B cell (primary cell): ENCODE measurements at regions of chr13 and their contacts with region 1.

Region 1: DNA sequence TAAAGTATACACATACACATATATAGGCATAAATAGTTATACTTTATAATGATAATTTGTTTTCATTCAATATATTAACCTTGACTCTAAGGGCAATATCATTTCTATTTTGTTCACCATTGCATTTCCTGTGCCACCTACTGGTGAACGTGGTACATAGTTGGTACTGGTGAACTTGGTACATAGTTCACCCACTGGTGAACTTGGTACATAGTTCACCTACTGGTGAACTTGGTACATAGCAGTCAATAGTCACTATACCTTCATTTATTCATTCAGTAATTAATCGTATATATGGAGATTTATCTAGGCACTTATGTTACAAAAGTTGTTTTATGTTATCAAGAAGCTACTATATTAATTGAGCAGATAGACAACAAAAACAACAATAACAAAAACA is 172.6 kb upstream of the ATXN8OS start:
- DNase-seq: no peak
- ATAC-seq: no peak
- H3K4me3 ChIP-seq: no peak overlapping the region
- H3K4me3 Mint-ChIP-seq: no peak overlapping the region
- H3K27ac ChIP-seq: no peak overlapping the region
- H3K27ac Mint-ChIP-seq: no peak overlapping the region
- H3K4me1 ChIP-seq: no peaks in the 10 kb centered on the region
- H3K4me1 Mint-ChIP-seq: no peaks in the 10 kb centered on the region
- H3K27me3 ChIP-seq: no peaks in the 10 kb centered on the region
- H3K27me3 Mint-ChIP-seq: no peaks in the 10 kb centered on the region
- CTCF ChIP-seq: no peak

Region 2: DNA sequence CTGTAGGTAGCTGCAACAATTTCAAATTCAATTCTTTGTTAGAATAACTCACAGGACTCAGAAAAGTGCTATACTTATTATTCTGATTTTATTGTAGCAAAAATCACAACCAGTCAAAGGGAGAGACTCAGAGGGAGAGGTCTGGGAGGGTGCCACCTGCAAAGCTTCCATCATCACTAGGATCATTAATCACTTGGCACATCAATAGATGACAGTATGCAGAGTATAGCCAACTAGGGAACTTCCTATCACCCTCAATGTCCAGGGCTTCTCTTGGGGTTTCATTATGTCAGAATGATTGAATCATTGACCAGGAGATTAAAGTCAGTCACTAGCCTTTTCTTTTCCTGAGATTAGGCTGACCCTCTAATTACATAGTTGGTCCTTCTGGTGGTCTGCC is 258.8 kb before region 1 on chr13:
- CTCF ChIA-PET with region 1: no interaction called
- POLR2A ChIA-PET with region 1: no interaction called
- intact Hi-C with region 1: loop called (anchors 10 kb)
- DNase-seq: no peak
- ATAC-seq: no peak
- H3K4me3 ChIP-seq: no peak overlapping the region
- H3K4me3 Mint-ChIP-seq: no peak overlapping the region
- H3K27ac ChIP-seq: no peak overlapping the region
- H3K27ac Mint-ChIP-seq: no peak overlapping the region
- H3K4me1 ChIP-seq: no peaks in the 10 kb centered on the region
- H3K4me1 Mint-ChIP-seq: no peaks in the 10 kb centered on the region
- H3K27me3 ChIP-seq: no peaks in the 10 kb centered on the region
- H3K27me3 Mint-ChIP-seq: no peaks in the 10 kb centered on the region
- CTCF ChIP-seq: no peak

Region 3: DNA sequence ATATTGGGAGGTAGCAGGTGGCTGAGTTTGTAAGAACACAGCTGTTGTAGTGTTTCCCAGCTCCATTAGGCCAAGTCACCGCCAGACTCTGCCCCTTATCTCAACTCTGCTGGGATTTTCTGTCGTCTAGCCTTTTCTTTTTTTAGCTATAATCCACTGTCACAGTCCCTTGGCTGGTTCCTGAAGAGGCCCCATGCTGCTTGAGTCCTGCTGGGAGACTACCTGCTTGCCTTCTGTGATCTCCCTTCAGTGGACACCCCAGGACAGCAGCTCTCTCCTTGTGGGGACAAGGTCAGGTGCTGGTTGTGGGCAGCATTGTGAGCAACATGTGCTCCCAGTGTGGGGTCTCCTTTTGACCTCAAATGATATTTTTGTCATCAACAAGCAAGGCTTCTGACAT is 22.4 kb before region 1 on chr13:
- CTCF ChIA-PET with region 1: no interaction called
- POLR2A ChIA-PET with region 1: no interaction called
- intact Hi-C with region 1: no loop called
- DNase-seq: no peak
- ATAC-seq: no peak
- H3K4me3 ChIP-seq: no peak overlapping the region
- H3K4me3 Mint-ChIP-seq: no peak overlapping the region
- H3K27ac ChIP-seq: no peak overlapping the region
- H3K27ac Mint-ChIP-seq: no peak overlapping the region
- H3K4me1 ChIP-seq: no peaks in the 10 kb centered on the region
- H3K4me1 Mint-ChIP-seq: no peaks in the 10 kb centered on the region
- H3K27me3 ChIP-seq: no peaks in the 10 kb centered on the region
- H3K27me3 Mint-ChIP-seq: no peaks in the 10 kb centered on the region
- CTCF ChIP-seq: no peak

Region 4: DNA sequence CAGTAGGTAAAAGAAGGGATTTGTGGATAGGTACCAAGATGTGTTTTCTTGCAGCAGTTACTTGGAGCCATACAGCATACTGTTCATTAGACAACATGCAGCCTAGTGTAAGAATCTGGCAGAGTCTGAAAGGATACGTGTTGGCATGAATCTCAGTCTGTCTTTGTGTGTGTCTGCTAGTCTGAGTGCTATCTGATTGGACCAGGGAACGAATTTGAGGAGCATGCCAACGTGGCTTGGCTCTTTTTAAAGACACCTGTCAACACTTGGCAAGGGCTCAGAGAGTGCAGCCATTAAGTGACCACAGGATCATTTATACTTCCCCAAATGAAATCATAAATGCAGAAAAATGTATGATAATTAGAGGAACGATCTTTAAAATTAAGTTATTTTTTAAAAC is 145.0 kb after region 1 on chr13:
- CTCF ChIA-PET with region 1: no interaction called
- POLR2A ChIA-PET with region 1: no interaction called
- intact Hi-C with region 1: no loop called
- DNase-seq: no peak
- ATAC-seq: no peak
- H3K4me3 ChIP-seq: no peak overlapping the region
- H3K4me3 Mint-ChIP-seq: no peak overlapping the region
- H3K27ac ChIP-seq: no peak overlapping the region
- H3K27ac Mint-ChIP-seq: no peak overlapping the region
- H3K4me1 ChIP-seq: no peaks in the 10 kb centered on the region
- H3K4me1 Mint-ChIP-seq: no peaks in the 10 kb centered on the region
- H3K27me3 ChIP-seq: no peaks in the 10 kb centered on the region
- H3K27me3 Mint-ChIP-seq: no peaks in the 10 kb centered on the region
- CTCF ChIP-seq: no peak

Region 5: GRCh38 chr13:70108356-70109105 is 173.5 kb after region 1 on chr13 and contains the start of gene KLHL1:
- CTCF ChIA-PET with region 1: no interaction called
- POLR2A ChIA-PET with region 1: no interaction called
- intact Hi-C with region 1: no loop called
- DNase-seq: no peak
- ATAC-seq: no peak
- H3K4me3 ChIP-seq: no peak within 1 kb of the TSS
- H3K4me3 Mint-ChIP-seq: no peak within 1 kb of the TSS
- H3K27ac ChIP-seq: no peak within 1 kb of the TSS
- H3K27ac Mint-ChIP-seq: no peak within 1 kb of the TSS
- H3K4me1 ChIP-seq: no peaks in the 10 kb centered on the region
- H3K4me1 Mint-ChIP-seq: no peaks in the 10 kb centered on the region
- H3K27me3 ChIP-seq: no peaks in the 10 kb centered on the region
- H3K27me3 Mint-ChIP-seq: no peaks in the 10 kb centered on the region
- CTCF ChIP-seq: no peak
- total RNA-seq, gene KLHL1: not detected in 2 replicates

Region 6: GRCh38 chr13:70362820-70363570 is 428.0 kb after region 1 on chr13:
- CTCF ChIA-PET with region 1: no interaction called
- POLR2A ChIA-PET with region 1: no interaction called
- intact Hi-C with region 1: no loop called
- DNase-seq: no peak
- ATAC-seq: no peak
- H3K4me3 ChIP-seq: no peak overlapping the region
- H3K4me3 Mint-ChIP-seq: no peak overlapping the region
- H3K27ac ChIP-seq: no peak overlapping the region
- H3K27ac Mint-ChIP-seq: no peak overlapping the region
- H3K4me1 ChIP-seq: no peaks in the 10 kb centered on the region
- H3K4me1 Mint-ChIP-seq: no peaks in the 10 kb centered on the region
- H3K27me3 ChIP-seq: no peaks in the 10 kb centered on the region
- H3K27me3 Mint-ChIP-seq: no peaks in the 10 kb centered on the region
- CTCF ChIP-seq: no peak